GM10248 (cell line): ENCODE measurements at regions of chr6 and their contacts with region 1.

Region 1: GRCh38 chr6:130587778-130588520 is 222.1 kb downstream of the TMEM200A start:
- DNase-seq: no peak
- CTCF ChIP-seq: no peak

Region 2: GRCh38 chr6:130376936-130377335 is 211.0 kb before region 1 on chr6:
- CTCF ChIA-PET with region 1: no interaction called
- POLR2A ChIA-PET with region 1: no interaction called
- DNase-seq: no peak
- CTCF ChIP-seq: no peak

Region 3: DNA sequence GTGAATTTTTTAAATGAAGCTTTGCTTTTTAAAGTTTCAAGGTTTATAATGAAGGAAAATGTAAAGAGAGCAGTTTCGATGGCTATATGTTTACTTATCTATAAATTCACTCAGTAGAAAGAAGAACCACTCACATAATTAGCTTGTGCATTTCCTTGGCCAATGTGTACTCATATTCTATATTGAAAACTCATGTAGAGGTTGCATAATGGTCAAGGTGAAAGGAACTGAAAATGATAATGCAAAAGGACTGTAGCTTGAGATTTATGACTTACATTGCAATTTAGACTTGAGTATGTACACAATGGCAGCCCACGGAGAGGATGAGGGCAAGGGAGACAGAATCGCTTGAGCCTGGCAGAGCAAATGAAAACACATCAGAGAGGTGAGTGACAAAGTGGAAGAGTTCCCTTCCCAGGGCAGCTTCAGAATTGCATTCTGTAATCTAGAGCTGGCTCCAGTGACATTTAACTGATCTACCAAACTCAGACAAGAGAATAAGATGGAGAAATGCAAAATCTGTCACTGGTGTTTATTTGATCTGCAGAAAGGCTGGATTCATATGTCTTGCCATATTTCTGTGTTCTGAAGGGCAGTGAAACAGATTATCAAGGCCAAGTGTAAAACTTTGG is 30.4 kb before region 1 on chr6:
- CTCF ChIA-PET with region 1: interaction called, 12 read pairs
- POLR2A ChIA-PET with region 1: no interaction called
- DNase-seq: no peak
- CTCF ChIP-seq: no peak

Region 4: GRCh38 chr6:130575971-130576370 is 12.0 kb before region 1 on chr6:
- CTCF ChIA-PET with region 1: interaction called, 19 read pairs
- POLR2A ChIA-PET with region 1: no interaction called
- DNase-seq: peak; percentile 20
- CTCF ChIP-seq: no peak